Activated T-helper 1 cell treated with anti-CD3 and anti-CD28 coated beads, Interleukin-12 subunit alpha, Interleukin-12 subunit beta, Interleukin-2, Interleukin-4 antibody, amounts not matched to agents 30 ng/mL and 10 ng/mL and 1 ng/mL, durations not matched to agents 14 hours and 24 hours and 36 hours (primary cell): ENCODE measurements at regions of chr1 and their contacts with region 1.

Region 1: GRCh38 chr1:181099152-181100014 is 10.9 kb downstream of the IER5 start:
- DNase-seq: peak; percentile 47
- H3K4me3 Mint-ChIP-seq: peak overlapping the region; percentile 75
- H3K27ac Mint-ChIP-seq: peak overlapping the region; percentile 98
- H3K4me1 Mint-ChIP-seq: peaks cover 96% of the 10 kb centered on the region
- H3K27me3 Mint-ChIP-seq: peaks cover 3% of the 10 kb centered on the region

Region 2: DNA sequence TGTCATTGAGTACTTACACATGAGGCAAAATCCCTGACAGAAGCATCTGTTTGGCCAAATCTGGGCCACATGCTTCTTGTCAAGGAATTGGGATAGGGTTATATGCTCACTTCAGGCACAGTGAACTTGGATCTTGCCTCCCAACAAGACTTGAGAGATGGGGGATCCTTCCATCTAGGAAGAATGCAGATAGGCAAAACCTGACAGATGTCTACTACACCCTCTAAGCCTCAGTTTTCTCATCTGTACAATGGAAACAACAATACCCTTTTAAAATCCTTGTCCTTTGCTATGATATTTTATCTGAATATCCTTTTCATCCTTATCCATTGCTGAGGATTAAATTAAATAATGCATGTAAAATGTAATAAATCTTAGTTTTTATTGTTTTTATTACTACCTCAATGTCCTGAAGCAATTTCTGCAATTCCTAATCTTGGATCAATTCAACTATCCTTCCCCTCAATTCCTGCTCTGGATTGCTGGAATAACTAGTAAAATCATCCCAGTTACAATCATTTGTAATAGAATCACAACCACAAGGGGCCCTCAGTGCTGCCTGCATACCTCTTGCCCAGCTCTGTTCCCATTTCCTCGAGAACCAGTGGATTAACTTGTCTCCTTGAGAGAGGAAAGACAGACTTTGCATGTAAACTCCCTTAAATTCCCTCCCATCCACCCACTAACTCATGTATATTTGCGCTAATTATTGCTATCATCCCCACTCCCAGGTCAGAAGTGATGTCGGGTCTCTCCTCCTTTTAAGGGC is 475.6 kb before region 1 on chr1:
- intact Hi-C with region 1: no loop called
- DNase-seq: no peak
- H3K4me3 Mint-ChIP-seq: no peak overlapping the region
- H3K27ac Mint-ChIP-seq: no peak overlapping the region
- H3K4me1 Mint-ChIP-seq: no peaks in the 10 kb centered on the region
- H3K27me3 Mint-ChIP-seq: peaks cover 16% of the 10 kb centered on the region

Region 3: GRCh38 chr1:181014477-181015250 is 84.7 kb before region 1 on chr1:
- intact Hi-C with region 1: loop called (anchors 1 kb)
- DNase-seq: no peak
- H3K4me3 Mint-ChIP-seq: no peak overlapping the region
- H3K27ac Mint-ChIP-seq: no peak overlapping the region
- H3K4me1 Mint-ChIP-seq: peaks cover 44% of the 10 kb centered on the region
- H3K27me3 Mint-ChIP-seq: no peaks in the 10 kb centered on the region

Region 4: GRCh38 chr1:181077576-181078242 is 21.7 kb before region 1 on chr1:
- intact Hi-C with region 1: loop called (anchors 2 kb)
- DNase-seq: no peak
- H3K4me3 Mint-ChIP-seq: no peak overlapping the region
- H3K27ac Mint-ChIP-seq: no peak overlapping the region
- H3K4me1 Mint-ChIP-seq: peaks cover 17% of the 10 kb centered on the region
- H3K27me3 Mint-ChIP-seq: peaks cover 39% of the 10 kb centered on the region

Region 5: DNA sequence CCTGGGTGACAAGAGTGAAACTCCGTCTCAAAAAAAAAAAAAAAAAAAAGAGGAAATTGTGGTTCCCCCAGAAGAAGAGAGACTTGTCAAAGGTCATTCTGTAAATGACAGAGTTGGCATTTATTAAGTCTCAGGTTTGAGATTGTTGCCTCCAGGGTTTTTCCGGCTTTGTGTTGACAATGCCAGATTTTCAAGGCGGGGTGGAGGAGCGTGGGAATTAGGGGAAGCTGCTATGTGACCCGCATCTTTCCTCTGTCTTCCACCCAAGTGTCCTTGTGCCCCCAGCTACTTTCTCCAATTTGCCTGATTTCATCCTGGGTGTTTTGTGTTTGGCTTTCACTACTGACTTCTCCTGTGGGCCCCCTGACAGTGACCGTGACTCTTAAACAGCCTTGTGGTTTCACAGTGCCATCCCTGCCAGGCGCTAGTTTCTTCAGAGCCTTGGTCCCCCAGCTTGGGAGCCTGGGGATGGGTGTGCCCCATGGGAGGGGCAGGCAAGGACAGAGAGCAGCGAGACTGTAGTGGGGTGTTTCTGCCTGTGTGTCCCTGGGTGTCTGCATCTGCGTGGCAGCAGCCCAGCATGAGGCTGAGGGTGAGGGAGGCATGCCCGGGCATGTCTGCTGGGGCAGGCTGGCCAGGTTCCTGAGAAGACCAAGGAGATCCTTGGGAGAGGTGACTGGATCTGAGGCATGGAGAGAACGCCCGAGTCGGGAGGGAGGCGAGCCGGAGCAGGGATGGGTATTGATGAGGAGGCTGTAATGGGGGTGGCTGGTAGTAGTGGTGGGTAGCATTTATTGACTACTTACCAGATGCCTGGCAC is 35.4 kb after region 1 on chr1:
- intact Hi-C with region 1: loop called (anchors 1 kb)
- DNase-seq: no peak
- H3K4me3 Mint-ChIP-seq: peak overlapping the region; percentile 57
- H3K27ac Mint-ChIP-seq: peak overlapping the region; percentile 93
- H3K4me1 Mint-ChIP-seq: peaks cover 78% of the 10 kb centered on the region
- H3K27me3 Mint-ChIP-seq: peaks cover 3% of the 10 kb centered on the region